ENCODE measurements at regions of chr20 and their contacts with region 1.

Region 1: DNA sequence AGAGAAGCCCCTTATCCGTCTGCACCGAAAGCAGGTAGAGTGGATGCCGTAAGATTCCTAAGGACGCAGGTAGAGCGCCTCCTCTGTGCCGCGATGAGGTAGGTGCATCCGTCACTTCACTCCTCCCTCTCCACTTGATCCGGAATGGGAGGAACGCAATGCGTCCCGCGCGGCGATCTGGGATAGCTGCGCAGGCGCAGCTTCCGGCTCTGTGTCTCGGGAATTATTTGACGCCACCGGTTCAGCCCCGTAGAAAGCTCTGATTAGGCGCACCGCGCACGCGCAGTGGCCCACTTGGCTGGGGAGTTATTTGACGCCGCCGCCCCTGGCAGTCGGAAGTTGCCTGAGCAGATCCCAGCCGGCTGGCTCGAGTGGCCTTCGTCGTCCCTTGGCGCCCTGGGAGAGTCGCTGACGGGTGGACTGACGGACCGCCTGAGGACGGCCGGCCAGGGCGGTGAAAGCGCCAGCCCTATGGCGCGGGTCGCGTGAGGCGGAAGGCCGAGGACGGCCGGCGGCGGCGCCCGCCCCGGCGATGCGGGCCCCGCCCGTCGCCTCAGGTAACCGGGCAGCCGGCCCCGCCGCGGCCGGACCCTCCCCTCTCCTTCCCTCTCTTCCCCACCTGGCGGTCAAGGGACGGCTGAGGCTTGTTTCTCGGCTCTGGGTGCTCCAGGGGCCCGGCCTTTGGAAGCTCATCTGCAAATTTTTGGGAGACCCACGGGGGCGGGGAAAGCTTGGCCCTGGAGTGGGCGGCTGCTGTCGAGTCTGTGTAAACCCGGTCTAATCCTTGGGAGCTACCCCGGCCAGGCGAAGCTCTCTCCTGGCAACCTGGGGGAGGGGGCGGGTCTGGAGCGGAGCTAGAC is at the start of gene RALGAPB:
- DNase-seq: peak; percentile 99
- H3K4me3 Mint-ChIP-seq: peak within 1 kb of the TSS; percentile 78
- H3K27ac Mint-ChIP-seq: peak within 1 kb of the TSS; percentile 81
- H3K4me1 Mint-ChIP-seq: peaks cover 23% of the 10 kb centered on the region
- H3K27me3 Mint-ChIP-seq: no peaks in the 10 kb centered on the region
- CTCF ChIP-seq: peak; percentile 46
- total RNA-seq, gene RALGAPB: 33.8 and 37.3 TPM in 2 replicates

Region 2: DNA sequence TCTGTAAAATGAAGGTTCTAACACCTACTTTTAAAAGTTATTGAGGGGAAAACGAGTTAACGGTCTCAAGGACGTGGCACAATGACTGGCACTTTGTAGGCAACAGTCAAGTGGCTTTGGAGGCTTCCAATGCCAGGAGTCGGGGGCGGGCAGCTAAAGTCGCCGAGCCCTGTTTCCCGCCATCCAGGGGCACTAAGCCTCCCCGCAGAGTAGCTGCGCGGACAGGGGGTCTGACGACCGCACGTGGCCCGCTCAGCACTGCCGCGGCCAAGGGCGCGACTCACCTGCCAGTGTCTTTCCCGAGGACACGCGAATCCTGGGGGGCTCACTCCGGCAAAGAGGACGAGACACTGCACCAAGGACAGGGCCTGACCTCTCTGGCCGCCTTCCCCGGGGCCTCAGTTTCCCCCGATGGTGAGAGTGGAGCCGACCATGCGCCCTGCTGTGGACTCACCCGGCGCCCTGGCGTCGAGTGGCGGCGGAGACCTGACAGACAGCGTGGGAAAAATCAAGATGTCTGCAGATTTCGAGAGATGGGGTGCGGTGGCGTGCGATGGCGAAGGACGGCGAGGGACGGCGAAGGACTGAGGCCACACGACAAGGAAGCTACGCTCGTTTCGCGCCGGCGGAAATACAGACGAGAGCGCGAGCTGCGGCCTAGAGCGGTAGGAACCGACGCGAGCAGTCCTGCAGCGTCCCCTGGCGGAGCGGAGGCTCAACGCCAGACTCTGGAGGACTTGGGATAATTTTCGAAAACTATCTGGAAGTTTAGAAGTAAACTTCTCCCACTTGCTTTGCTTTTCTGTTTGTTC is 37.8 kb before region 1 on chr20 and contains the start of gene SNHG17:
- CTCF ChIA-PET with region 1: interaction called, 70 read pairs
- POLR2A ChIA-PET with region 1: interaction called, 147 read pairs
- intact Hi-C with region 1: loop called (anchors 2 kb)
- DNase-seq: peak; percentile 88
- H3K4me3 Mint-ChIP-seq: peak within 1 kb of the TSS; percentile 90
- H3K27ac Mint-ChIP-seq: peak within 1 kb of the TSS; percentile 92
- H3K4me1 Mint-ChIP-seq: peaks cover 22% of the 10 kb centered on the region
- H3K27me3 Mint-ChIP-seq: no peaks in the 10 kb centered on the region
- CTCF ChIP-seq: peak; percentile 99
- total RNA-seq, gene SNHG17: 83.6 and 133 TPM in 2 replicates

Region 3: DNA sequence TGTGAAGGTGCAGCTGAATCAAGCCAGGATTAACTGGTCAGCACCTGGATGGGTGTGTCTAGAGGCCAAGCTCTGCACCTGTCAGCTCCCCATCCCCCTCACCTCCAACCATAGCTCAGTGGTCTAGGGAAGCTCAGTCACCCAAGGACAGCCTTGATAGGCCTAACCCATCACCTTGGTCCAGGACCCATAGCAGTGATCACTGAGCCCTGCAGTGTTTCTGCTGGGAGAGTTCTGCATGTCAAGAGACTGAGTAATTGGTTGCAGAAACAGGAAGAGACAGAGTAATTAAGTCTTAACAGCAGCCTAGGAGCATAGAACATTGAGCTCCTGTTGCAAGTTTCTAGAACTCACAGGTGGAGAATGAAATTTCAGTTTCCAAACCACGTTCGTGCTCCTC is 18.8 kb before region 1 on chr20:
- CTCF ChIA-PET with region 1: interaction called, 14 read pairs
- POLR2A ChIA-PET with region 1: interaction called, 91 read pairs
- intact Hi-C with region 1: no loop called
- DNase-seq: no peak
- H3K4me3 Mint-ChIP-seq: no peak overlapping the region
- H3K27ac Mint-ChIP-seq: no peak overlapping the region
- H3K4me1 Mint-ChIP-seq: peaks cover 7% of the 10 kb centered on the region
- H3K27me3 Mint-ChIP-seq: no peaks in the 10 kb centered on the region
- CTCF ChIP-seq: no peak

Region 4: GRCh38 chr20:38485041-38485440 is 12.3 kb after region 1 on chr20:
- CTCF ChIA-PET with region 1: interaction called, 33 read pairs
- POLR2A ChIA-PET with region 1: interaction called, 85 read pairs
- intact Hi-C with region 1: no loop called
- DNase-seq: no peak
- H3K4me3 Mint-ChIP-seq: no peak overlapping the region
- H3K27ac Mint-ChIP-seq: no peak overlapping the region
- H3K4me1 Mint-ChIP-seq: peaks cover 6% of the 10 kb centered on the region
- H3K27me3 Mint-ChIP-seq: no peaks in the 10 kb centered on the region
- CTCF ChIP-seq: no peak

Region 5: GRCh38 chr20:38523697-38524096 is 51.0 kb after region 1 on chr20:
- CTCF ChIA-PET with region 1: interaction called, 9 read pairs
- POLR2A ChIA-PET with region 1: interaction called, 16 read pairs
- intact Hi-C with region 1: no loop called
- DNase-seq: peak; percentile 71
- H3K4me3 Mint-ChIP-seq: no peak overlapping the region
- H3K27ac Mint-ChIP-seq: peak overlapping the region; percentile 3
- H3K4me1 Mint-ChIP-seq: peaks cover 14% of the 10 kb centered on the region
- H3K27me3 Mint-ChIP-seq: no peaks in the 10 kb centered on the region
- CTCF ChIP-seq: no peak